Activated CD4-positive, alpha-beta memory T cell treated with anti-CD3 and anti-CD28 coated beads, Interleukin-2, amount 10 ng/mL, durations not matched to agents 7 days and 5 days (primary cell): ENCODE measurements at regions of chr17 and their contacts with region 1.

Region 1: GRCh38 chr17:47205419-47205963 is 3.7 kb upstream of the MYL4 start:
- DNase-seq: peak; percentile 81
- H3K4me3 Mint-ChIP-seq: peak overlapping the region; percentile 70
- H3K27ac Mint-ChIP-seq: peak overlapping the region; percentile 96
- H3K4me1 Mint-ChIP-seq: peaks cover 49% of the 10 kb centered on the region
- H3K27me3 Mint-ChIP-seq: no peaks in the 10 kb centered on the region

Region 2: DNA sequence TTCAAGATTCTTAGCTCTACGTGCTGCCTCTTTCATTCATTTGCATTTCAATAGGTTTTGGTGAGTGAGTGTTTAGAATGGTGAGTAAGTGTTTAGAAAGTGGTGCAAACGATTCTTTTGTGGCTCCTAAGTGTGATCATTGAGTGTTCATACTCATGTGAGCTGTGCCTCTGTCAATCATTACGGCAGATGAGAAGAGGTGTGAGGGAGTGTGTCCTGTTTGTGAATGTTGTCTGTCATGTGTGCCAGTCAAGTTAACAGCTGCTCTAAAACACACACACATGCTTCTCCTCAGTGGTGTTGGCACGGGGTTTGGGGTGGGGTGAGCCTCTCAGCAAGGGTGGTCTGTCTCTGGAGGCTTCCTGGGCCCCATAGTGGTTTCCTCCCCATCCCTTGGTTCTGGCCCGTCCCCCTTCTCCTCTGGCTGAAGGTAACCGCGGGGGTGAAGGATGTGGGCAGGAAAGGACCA is 15.1 kb after region 1 on chr17:
- CTCF ChIA-PET with region 1: interaction called, 5 read pairs
- POLR2A ChIA-PET with region 1: interaction called, 44 read pairs
- DNase-seq: peak; percentile 43
- H3K4me3 Mint-ChIP-seq: no peak overlapping the region
- H3K27ac Mint-ChIP-seq: peak overlapping the region; percentile 77
- H3K4me1 Mint-ChIP-seq: peaks cover 52% of the 10 kb centered on the region
- H3K27me3 Mint-ChIP-seq: no peaks in the 10 kb centered on the region

Region 3: GRCh38 chr17:47239619-47240374 is 34.3 kb after region 1 on chr17:
- CTCF ChIA-PET with region 1: no interaction called
- POLR2A ChIA-PET with region 1: no interaction called
- DNase-seq: no peak
- H3K4me3 Mint-ChIP-seq: no peak overlapping the region
- H3K27ac Mint-ChIP-seq: no peak overlapping the region
- H3K4me1 Mint-ChIP-seq: peaks cover 12% of the 10 kb centered on the region
- H3K27me3 Mint-ChIP-seq: peaks cover 20% of the 10 kb centered on the region

Region 4: GRCh38 chr17:47295062-47295845 is 89.8 kb after region 1 on chr17:
- CTCF ChIA-PET with region 1: no interaction called
- POLR2A ChIA-PET with region 1: no interaction called
- DNase-seq: no peak
- H3K4me3 Mint-ChIP-seq: no peak overlapping the region
- H3K27ac Mint-ChIP-seq: no peak overlapping the region
- H3K4me1 Mint-ChIP-seq: peaks cover 3% of the 10 kb centered on the region
- H3K27me3 Mint-ChIP-seq: peaks cover under 1% of the 10 kb centered on the region

Region 5: GRCh38 chr17:47315451-47316266 is 110.2 kb after region 1 on chr17:
- CTCF ChIA-PET with region 1: interaction called, 10 read pairs
- POLR2A ChIA-PET with region 1: no interaction called
- DNase-seq: peak; percentile 29
- H3K4me3 Mint-ChIP-seq: no peak overlapping the region
- H3K27ac Mint-ChIP-seq: no peak overlapping the region
- H3K4me1 Mint-ChIP-seq: no peaks in the 10 kb centered on the region
- H3K27me3 Mint-ChIP-seq: peaks cover 9% of the 10 kb centered on the region

Region 6: DNA sequence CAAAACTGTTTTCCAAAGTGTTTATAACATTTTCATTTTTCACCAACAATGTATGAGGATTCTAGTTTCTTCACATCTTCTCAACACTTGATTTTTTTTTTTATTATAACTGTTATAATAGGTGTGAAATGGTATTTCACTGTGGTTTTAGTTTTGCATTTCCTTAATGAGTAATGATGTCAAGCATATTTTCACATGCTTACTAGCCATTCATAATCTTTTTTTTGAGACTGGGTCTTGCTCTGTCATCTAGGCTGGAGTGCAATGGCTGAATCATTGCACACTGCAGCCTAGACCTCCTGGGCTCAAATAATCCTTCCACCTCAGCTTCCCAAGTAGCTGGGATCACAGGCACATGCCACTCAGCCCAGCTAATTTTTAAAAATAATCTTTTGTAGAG is 183.3 kb after region 1 on chr17:
- CTCF ChIA-PET with region 1: no interaction called
- POLR2A ChIA-PET with region 1: no interaction called
- DNase-seq: no peak
- H3K4me3 Mint-ChIP-seq: no peak overlapping the region
- H3K27ac Mint-ChIP-seq: no peak overlapping the region
- H3K4me1 Mint-ChIP-seq: no peaks in the 10 kb centered on the region
- H3K27me3 Mint-ChIP-seq: no peaks in the 10 kb centered on the region